IMR-90 (cell line): ENCODE measurements at regions of chr3 and their contacts with region 1.

Region 1: DNA sequence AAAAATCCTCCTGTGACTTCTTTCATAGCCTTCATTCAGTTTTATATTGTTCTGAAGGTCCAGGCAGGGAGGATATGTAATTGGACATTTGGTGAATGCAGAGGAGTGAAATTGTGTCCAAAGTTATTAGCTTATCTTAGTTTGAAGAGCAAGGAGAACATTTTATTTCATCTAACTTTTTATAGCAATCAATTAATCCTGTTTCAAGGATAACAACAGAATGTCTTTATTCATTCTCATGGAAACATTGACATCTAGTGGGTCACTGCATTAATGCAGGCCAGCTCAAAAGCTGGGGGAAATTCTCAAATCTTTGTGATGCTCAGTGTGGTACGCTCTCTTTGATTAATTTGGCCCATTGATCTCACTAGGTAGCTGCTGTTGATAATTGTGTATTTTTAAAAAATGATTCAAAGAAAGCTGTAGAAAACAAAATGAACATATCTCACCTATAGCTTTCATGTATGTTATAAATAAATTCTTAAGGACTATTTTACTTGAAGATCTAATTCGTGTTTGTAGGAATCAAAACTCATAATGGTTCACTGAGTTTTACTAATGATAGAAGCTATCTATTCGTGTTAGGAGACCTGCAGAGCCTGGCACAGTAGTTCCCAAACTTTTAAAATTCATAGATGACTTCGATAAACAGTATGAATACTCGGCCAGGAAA is 150.8 kb upstream of the KCNMB2 start:
- DNase-seq: peak; percentile 51
- ATAC-seq: peak; percentile 63
- H3K4me3 ChIP-seq: no peak overlapping the region
- H3K27ac ChIP-seq: no peak overlapping the region; the same call in 1 of the 2 replicates
- H3K4me1 ChIP-seq: peaks cover 4% of the 10 kb centered on the region
- H3K27me3 ChIP-seq: no peaks in the 10 kb centered on the region
- CTCF ChIP-seq: peak; percentile 90
- POLR2A ChIP-seq: no peak
- RAD21 ChIP-seq: peak; percentile 96

Region 2: GRCh38 chr3:176872771-176873209 is 1512.6 kb before region 1 on chr3:
- CTCF ChIA-PET with region 1: interaction called, 10 read pairs
- POLR2A ChIA-PET with region 1: no interaction called
- dilution Hi-C with region 1: no loop called
- in situ Hi-C with region 1: no loop called
- intact Hi-C with region 1: loop called (anchors 1 kb)
- DNase-seq: peak; percentile 56
- ATAC-seq: peak; percentile 87
- H3K4me3 ChIP-seq: no peak overlapping the region
- H3K27ac ChIP-seq: no peak overlapping the region
- H3K4me1 ChIP-seq: no peaks in the 10 kb centered on the region
- H3K27me3 ChIP-seq: peaks cover 3% of the 10 kb centered on the region; the same call in 1 of the 2 replicates
- CTCF ChIP-seq: peak; percentile 76
- POLR2A ChIP-seq: no peak
- RAD21 ChIP-seq: peak; percentile 66

Region 3: GRCh38 chr3:177197041-177197727 is 1188.2 kb before region 1 on chr3 and contains the start of gene TBL1XR1:
- CTCF ChIA-PET with region 1: interaction called, 3 read pairs
- POLR2A ChIA-PET with region 1: no interaction called
- dilution Hi-C with region 1: no loop called
- in situ Hi-C with region 1: no loop called
- intact Hi-C with region 1: loop called (anchors 1 kb)
- DNase-seq: peak; percentile 94
- ATAC-seq: peak; percentile 77
- H3K4me3 ChIP-seq: peak within 1 kb of the TSS; percentile 96
- H3K27ac ChIP-seq: peak within 1 kb of the TSS; percentile 100
- H3K4me1 ChIP-seq: peaks cover 10% of the 10 kb centered on the region
- H3K27me3 ChIP-seq: no peaks in the 10 kb centered on the region
- CTCF ChIP-seq: no peak
- POLR2A ChIP-seq: no peak
- RAD21 ChIP-seq: peak; percentile 35; the same call in 1 of the 2 replicates
- total RNA-seq, gene TBL1XR1: 170 and 181 TPM in 2 replicates

Region 4: DNA sequence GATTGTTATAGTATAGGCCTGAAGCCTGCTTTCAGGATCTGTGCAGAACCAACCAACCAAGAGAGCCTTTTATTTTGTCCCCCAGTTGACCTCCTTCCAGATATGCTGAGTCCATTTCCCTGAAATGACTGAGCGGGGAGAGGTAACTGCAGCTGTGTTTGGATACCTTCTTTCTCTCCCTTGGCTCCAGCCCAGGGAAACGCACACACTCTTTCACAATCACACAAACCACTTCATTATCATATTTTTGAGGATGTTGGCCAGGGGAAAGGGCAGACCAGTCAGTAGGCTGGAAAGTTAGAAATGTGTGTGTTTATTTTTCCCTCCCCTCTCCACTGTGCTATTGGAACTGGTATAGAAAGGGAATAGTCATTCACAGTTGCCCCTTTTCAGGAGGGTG is 770.4 kb before region 1 on chr3:
- CTCF ChIA-PET with region 1: no interaction called
- POLR2A ChIA-PET with region 1: no interaction called
- dilution Hi-C with region 1: no loop called
- in situ Hi-C with region 1: no loop called
- intact Hi-C with region 1: loop called (anchors 10 kb)
- DNase-seq: peak; percentile 97
- ATAC-seq: peak; percentile 88
- H3K4me3 ChIP-seq: no peak overlapping the region
- H3K27ac ChIP-seq: no peak overlapping the region; the same call in 1 of the 2 replicates
- H3K4me1 ChIP-seq: peaks cover 20% of the 10 kb centered on the region
- H3K27me3 ChIP-seq: no peaks in the 10 kb centered on the region
- CTCF ChIP-seq: no peak
- POLR2A ChIP-seq: no peak
- RAD21 ChIP-seq: 0 out of 2 replicates have a peak, but pooled peaks have one; percentile 4

Region 5: GRCh38 chr3:177906126-177906511 is 479.3 kb before region 1 on chr3:
- CTCF ChIA-PET with region 1: interaction called, 3 read pairs
- POLR2A ChIA-PET with region 1: no interaction called
- dilution Hi-C with region 1: no loop called
- in situ Hi-C with region 1: no loop called
- intact Hi-C with region 1: loop called (anchors 1 kb)
- DNase-seq: peak; percentile 83
- ATAC-seq: peak; percentile 63
- H3K4me3 ChIP-seq: no peak overlapping the region
- H3K27ac ChIP-seq: peak overlapping the region; percentile 77; the same call in 1 of the 2 replicates
- H3K4me1 ChIP-seq: peaks cover 12% of the 10 kb centered on the region
- H3K27me3 ChIP-seq: no peaks in the 10 kb centered on the region
- CTCF ChIP-seq: 0 out of 2 replicates have a peak, but pooled peaks have one; percentile 17
- POLR2A ChIP-seq: no peak
- RAD21 ChIP-seq: peak; percentile 30

Region 6: GRCh38 chr3:178352326-178353005 is 33.0 kb before region 1 on chr3:
- CTCF ChIA-PET with region 1: interaction called, 7 read pairs
- POLR2A ChIA-PET with region 1: no interaction called
- dilution Hi-C with region 1: no loop called
- in situ Hi-C with region 1: no loop called
- intact Hi-C with region 1: loop called (anchors 2 kb)
- DNase-seq: peak; percentile 86
- ATAC-seq: peak; percentile 89
- H3K4me3 ChIP-seq: no peak overlapping the region
- H3K27ac ChIP-seq: peak overlapping the region; percentile 72; the same call in 1 of the 2 replicates
- H3K4me1 ChIP-seq: peaks cover 7% of the 10 kb centered on the region
- H3K27me3 ChIP-seq: no peaks in the 10 kb centered on the region
- CTCF ChIP-seq: no peak
- POLR2A ChIP-seq: no peak
- RAD21 ChIP-seq: no peak